ENCODE measurements at regions of chr10 and their contacts with region 1.

Region 1: DNA sequence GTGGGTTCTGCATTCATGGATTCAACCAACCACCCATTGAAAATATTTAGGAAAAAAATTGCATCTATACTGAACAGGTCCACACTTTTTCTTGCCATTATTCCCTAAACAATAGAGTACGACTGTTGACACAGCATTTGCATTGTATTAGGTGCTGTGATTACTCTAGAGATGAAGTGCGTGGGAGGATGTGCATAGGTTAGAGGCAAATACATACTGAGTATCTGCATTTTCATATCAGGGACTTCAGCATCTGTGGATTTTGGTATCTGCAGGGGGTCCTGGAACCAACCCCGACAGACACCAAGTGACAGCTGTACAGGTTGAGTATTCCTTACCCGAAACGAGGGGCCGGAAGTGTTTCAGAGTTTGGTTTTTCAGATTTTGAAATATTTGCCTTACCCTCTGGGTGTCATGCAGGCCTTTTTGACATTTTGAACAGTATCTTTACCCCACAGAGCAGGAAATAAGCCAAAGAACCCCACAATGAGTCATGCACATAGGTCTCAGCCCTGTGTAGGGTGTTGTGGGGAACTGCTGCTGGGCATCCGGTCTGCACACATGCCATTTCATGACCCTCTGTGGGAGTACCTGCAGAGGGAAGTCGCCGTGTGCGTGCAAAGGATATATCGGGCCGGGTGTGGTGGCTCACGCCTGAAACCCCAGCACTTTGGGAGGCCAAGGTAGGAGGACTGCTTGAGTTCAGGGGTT is 14.5 kb downstream of the NUDT5 start:
- DNase-seq: peak in 8 of 9 donors; percentile 13 to 57 (median 48)
- ATAC-seq: peak; percentile 99
- H3K4me3 ChIP-seq: no peak overlapping the region
- H3K4me3 Mint-ChIP-seq: peak overlapping the region in 7 of 10 donors; percentile 12 to 68 (median 32)
- H3K27ac ChIP-seq: peak overlapping the region; percentile 17
- H3K27ac Mint-ChIP-seq: peak overlapping the region; percentile 54 to 92 (median 78)
- H3K4me1 ChIP-seq: peaks cover 0 to 17% of the 10 kb centered on the region in 2 donors
- H3K4me1 Mint-ChIP-seq: peaks cover 0 to 46% (median 8%) of the 10 kb centered on the region in 7 donors
- H3K27me3 ChIP-seq: no peaks in the 10 kb centered on the region
- H3K27me3 Mint-ChIP-seq: no peaks in the 10 kb centered on the region

Region 2: GRCh38 chr10:12214763-12215218 is 33.6 kb after region 1 on chr10:
- CTCF ChIA-PET with region 1: no interaction called
- POLR2A ChIA-PET with region 1: interaction called, 3 read pairs
- intact Hi-C with region 1: loop called in 1 of 2 experiments (anchors 1 kb)
- DNase-seq: peak in 7 of 9 donors; percentile 27 to 62 (median 47)
- ATAC-seq: peak; percentile 69
- H3K4me3 ChIP-seq: no peak overlapping the region
- H3K4me3 Mint-ChIP-seq: peak overlapping the region; percentile 61 to 84 (median 72)
- H3K27ac ChIP-seq: peak overlapping the region; percentile 38
- H3K27ac Mint-ChIP-seq: peak overlapping the region; percentile 73 to 96 (median 87)
- H3K4me1 ChIP-seq: no peaks in the 10 kb centered on the region
- H3K4me1 Mint-ChIP-seq: peaks cover 5 to 37% (median 20%) of the 10 kb centered on the region in 7 donors
- H3K27me3 ChIP-seq: no peaks in the 10 kb centered on the region
- H3K27me3 Mint-ChIP-seq: no peaks in the 10 kb centered on the region

Region 3: GRCh38 chr10:13453896-13454295 is 1272.7 kb after region 1 on chr10:
- CTCF ChIA-PET with region 1: no interaction called
- POLR2A ChIA-PET with region 1: no interaction called
- intact Hi-C with region 1: no loop called
- DNase-seq: peak in 7 of 9 donors; percentile 6 to 66 (median 47)
- ATAC-seq: peak; percentile 91
- H3K4me3 ChIP-seq: no peak overlapping the region
- H3K4me3 Mint-ChIP-seq: peak overlapping the region in 3 of 10 donors; percentile 3 to 40 (median 4)
- H3K27ac ChIP-seq: no peak overlapping the region
- H3K27ac Mint-ChIP-seq: peak overlapping the region in 3 of 9 donors; percentile 12 to 41 (median 22)
- H3K4me1 ChIP-seq: peaks cover 0 to 3% of the 10 kb centered on the region in 2 donors
- H3K4me1 Mint-ChIP-seq: peaks cover 0 to 9% (median 7%) of the 10 kb centered on the region in 7 donors
- H3K27me3 ChIP-seq: no peaks in the 10 kb centered on the region
- H3K27me3 Mint-ChIP-seq: peaks cover 12 to 33% (median 17%) of the 10 kb centered on the region in 5 donors